AG04449 (cell line): ENCODE measurements at regions of chr7 and their contacts with region 1.

Region 1: DNA sequence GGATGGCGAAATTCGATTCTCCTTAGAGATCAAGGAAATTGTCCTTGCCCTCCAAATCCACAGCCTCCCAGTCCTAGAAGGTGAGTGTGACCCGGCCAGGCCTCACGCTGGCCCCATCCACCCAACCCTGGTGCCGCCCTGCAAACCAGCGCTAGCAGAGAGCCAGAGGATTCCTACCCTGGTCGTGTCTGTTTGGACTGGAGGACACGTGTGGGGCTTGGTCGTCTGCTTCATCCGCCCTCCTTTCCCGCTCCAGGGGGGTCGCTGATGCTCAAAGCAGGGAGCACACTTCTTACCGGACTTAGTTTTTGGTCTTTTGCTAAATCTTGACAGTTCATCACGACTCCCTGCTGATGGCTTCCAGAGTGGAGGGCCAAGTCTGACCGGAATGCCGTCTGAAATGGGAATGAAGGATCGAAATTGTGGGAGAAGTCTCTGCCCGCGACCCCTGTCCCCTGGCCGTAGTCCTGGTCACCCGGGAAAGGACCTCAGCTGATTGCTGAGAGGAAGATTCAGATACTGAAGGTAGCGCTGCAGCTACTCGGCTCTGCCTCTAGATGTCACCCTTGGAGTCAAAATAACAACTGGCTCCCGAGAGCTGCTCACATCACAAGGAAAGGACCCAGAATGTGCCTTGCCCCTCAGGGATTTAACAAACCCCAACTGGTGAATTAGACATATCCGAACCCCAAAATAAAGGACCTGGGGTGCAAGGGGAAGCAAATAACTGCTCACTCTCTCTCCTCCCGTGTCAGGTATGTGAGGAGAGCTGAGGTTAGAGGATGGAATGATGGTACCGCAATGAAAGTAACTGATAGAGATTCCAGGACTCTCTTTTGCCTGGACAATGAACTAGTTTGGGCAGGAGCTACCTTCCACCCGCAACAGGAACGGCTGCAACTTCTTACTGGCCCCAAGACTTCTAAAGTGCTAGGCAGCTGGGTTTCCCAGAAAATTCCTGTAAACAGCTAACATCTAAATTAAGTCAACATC is 23.5 kb upstream of the ORC5 start:
- DNase-seq: no peak
- H3K4me3 ChIP-seq: peak overlapping the region; percentile 23
- CTCF ChIP-seq: peak; percentile 79

Region 2: DNA sequence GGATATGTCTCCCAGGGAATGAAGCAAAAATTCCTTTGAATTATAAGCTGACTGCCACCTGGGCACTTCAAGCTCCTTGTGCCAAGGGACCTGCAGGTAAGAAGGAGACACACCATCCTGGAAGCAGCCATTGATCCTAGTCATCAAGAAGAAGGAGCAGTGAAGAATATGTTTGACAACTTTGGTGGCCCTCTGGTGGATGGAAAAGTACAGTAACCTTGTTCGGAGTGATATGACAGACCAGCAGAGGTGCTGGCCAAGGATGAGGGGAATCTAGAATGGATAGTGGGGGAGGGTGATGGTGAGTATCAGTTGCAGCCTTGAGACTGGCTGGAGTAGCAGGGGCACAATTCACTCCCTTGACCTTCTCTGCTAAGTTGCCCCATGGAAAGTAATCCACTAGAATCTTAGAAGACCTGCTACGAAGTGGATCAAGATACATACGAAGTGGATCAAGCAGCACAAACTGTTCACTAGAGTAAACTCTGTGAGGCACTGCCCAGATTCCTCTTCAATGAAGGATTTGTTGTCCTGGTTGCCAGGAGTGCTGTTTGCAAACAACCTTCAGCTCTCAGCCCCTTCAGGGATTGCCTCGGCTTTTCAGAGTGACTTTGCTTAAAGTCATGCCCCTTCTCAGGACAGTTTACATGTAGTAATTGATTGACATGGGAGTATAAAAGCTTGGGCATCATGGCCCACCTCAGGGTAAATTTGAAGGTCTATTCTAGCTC is 21.2 kb after region 1 on chr7:
- CTCF ChIA-PET with region 1: interaction called, 11 read pairs
- POLR2A ChIA-PET with region 1: no interaction called
- DNase-seq: no peak
- H3K4me3 ChIP-seq: no peak overlapping the region
- CTCF ChIP-seq: peak; percentile 1

Region 3: DNA sequence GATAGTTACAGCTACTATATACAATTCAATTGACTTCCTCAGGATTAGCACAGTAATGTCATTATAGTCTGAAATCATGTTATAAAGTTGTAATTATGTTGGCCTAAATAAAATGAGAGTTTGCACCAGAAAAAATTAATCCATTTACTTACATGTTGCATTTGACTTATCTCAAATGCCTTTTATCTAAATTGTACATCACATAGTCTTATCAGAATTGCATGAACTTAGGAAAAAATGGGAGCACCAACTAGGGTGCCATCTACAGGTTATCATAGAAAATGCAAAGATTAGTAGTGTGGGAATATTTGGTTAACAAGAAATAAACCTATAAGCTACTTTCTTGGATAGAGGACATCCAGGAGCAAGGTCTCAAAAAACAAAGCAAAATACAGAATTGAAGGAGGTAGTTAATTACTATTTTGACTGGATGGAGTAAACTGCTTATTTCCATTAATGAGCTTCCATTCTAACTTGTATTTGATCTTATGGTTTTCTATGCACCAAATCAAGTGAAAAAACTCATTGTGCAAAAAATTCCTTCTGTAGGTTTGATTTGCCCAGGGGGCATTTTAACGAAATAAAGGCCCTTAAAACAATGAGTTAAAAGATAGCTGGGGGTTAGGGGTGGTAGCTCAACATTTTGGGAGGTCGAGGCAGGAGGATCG is 36.5 kb after region 1 on chr7:
- CTCF ChIA-PET with region 1: interaction called, 66 read pairs
- POLR2A ChIA-PET with region 1: no interaction called
- DNase-seq: no peak
- H3K4me3 ChIP-seq: no peak overlapping the region
- CTCF ChIP-seq: peak; percentile 44

Region 4: DNA sequence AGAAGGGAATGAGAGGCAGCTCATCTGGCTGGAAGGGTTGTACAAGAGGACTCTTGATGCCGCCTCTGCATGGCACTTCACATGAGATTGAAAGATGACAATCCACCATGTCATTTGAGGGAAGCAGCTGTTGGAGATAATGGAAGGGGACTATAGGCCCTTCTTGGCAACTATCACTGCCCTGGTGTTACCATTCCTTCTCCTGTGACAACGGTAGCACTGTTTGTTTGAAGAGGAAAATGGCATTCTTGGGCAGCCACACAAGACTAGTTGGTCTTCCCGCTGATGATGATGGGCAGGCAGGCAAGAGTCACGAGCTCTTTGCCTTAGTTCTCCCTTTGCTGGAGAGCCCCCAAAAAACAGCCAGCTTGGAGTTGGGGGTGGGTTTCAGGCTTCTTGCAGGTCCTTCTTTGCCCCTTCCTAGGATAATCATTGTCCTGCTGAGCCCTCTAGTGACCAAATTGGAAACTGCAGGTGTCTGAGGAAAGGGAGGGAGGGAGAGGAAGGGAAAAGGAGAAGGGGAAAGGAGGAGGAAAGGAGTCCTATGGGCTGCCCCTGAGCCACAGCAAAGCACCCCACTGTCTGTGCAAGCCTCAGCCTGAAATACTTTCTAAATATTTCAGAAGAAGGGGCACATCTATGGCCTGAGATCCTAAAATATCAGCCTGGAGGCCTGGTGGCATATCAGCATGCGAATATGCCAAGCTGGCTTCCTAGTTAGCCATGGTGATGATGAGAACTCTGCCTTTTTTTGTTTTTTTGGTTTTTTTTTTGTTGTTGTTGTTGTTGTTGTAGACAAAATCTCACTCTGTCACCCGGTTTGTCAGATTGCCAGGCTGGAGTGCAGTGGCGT is 617.0 kb after region 1 on chr7:
- CTCF ChIA-PET with region 1: interaction called, 49 read pairs
- POLR2A ChIA-PET with region 1: no interaction called
- DNase-seq: no peak
- H3K4me3 ChIP-seq: no peak overlapping the region
- CTCF ChIP-seq: peak; percentile 78